ENCODE measurements at regions of chr13 and their contacts with region 1.

Region 1: DNA sequence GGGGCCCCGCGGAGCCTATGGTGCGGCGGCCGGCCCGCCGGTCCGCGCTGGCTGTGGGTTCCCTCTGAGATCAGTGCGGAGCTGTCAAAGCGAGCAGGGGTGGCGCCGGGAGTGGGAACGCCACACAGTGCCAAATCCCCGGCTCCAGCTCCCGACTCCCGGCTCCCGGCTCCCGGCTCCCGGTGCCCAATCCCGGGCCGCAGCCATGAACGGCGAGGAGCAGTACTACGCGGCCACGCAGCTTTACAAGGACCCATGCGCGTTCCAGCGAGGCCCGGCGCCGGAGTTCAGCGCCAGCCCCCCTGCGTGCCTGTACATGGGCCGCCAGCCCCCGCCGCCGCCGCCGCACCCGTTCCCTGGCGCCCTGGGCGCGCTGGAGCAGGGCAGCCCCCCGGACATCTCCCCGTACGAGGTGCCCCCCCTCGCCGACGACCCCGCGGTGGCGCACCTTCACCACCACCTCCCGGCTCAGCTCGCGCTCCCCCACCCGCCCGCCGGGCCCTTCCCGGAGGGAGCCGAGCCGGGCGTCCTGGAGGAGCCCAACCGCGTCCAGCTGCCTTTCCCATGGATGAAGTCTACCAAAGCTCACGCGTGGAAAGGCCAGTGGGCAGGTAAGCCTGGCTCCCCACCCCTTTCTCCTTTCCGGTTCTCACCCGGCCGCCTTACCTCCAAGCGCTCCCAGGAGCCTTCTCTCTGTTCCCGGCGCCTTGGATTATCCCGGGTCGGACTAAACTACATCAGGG is at the start of gene PDX1:
- DNase-seq: no peak
- ATAC-seq: peak; percentile 71
- H3K4me3 Mint-ChIP-seq: peak within 1 kb of the TSS; percentile 71
- H3K27ac Mint-ChIP-seq: peak within 1 kb of the TSS; percentile 46
- H3K4me1 Mint-ChIP-seq: peaks cover 41% of the 10 kb centered on the region
- H3K27me3 Mint-ChIP-seq: peaks cover 64% of the 10 kb centered on the region
- CTCF ChIP-seq: no peak
- total RNA-seq, gene PDX1: not detected in 2 replicates

Region 2: DNA sequence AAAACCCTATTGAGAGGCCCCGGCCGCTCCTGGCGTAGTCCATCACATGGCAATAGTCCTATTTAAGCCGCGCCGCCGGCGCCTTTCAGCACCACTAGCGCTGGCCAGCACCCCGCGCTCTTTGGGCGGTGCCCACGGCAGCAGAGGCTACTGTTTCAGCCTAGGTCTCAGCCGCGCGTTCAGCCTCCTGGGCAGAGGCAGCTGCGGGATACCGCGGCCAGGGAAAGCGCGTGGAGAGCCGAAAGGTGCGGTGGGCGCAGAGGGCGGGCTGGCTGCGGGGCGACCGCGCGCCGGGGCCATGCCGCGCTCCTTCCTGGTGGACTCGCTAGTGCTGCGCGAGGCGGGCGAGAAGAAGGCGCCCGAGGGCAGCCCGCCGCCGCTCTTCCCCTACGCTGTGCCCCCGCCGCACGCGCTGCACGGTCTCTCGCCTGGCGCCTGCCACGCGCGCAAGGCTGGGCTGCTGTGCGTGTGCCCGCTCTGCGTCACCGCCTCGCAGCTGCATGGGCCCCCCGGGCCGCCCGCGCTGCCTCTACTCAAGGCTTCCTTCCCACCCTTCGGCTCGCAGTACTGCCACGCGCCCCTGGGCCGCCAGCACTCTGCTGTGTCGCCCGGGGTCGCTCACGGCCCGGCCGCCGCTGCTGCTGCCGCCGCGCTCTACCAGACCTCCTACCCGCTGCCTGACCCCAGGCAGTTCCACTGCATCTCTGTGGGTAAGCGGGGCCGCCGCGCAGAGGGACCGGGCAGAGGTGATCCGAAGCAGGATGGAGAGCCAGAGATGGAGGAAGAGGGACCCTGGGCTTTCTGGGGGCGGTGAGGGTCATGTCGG is 127.5 kb before region 1 on chr13 and contains the start of gene GSX1:
- CTCF ChIA-PET with region 1: no interaction called
- POLR2A ChIA-PET with region 1: no interaction called
- intact Hi-C with region 1: loop called (anchors 2 kb)
- DNase-seq: peak; percentile 33
- ATAC-seq: peak; percentile 70
- H3K4me3 Mint-ChIP-seq: peak within 1 kb of the TSS; percentile 82
- H3K27ac Mint-ChIP-seq: no peak within 1 kb of the TSS
- H3K4me1 Mint-ChIP-seq: peaks cover 37% of the 10 kb centered on the region
- H3K27me3 Mint-ChIP-seq: peaks cover 71% of the 10 kb centered on the region
- CTCF ChIP-seq: no peak
- total RNA-seq, gene GSX1: not detected in 2 replicates

Measured in activated B cell treated with CpG ODN at 0.5 μM for 24 hours (primary cell).